A673 (cell line): ENCODE measurements at regions of chr1 and their contacts with region 1.

Region 1: DNA sequence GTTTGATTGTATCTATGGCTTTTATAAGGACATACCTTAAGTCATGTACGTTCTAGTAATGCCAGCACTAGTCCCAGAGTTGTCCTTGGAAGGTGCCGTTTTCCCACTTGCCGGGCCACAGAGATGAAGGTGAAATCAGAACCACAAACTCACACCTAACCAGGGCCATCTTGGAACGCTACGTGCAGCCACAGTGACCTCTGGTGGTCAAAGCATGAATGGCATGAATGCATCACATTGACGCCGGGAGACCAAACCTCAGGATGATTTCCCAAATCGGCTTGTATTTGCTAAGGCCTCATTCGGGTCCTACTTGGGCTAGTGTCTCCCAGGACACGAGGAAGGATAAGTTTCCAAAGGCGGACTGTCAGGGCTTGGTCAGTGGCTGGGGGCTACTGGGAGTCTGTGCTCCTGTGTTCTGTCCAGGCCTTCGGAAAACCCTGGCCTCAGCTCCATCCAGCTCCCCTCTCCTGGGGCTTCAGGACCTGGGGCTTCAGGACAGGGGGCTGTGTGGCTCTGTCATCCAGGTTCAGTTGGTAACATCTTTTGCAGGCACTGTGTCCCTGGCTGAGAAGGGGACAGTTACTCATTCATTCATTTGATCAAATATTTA is 260.5 kb downstream of the PRDM2 start:
- DNase-seq: peak; percentile 82
- H3K4me3 ChIP-seq: no peak overlapping the region
- H3K27ac ChIP-seq: no peak overlapping the region
- H3K4me1 ChIP-seq: peaks cover 34% of the 10 kb centered on the region
- H3K27me3 ChIP-seq: no peaks in the 10 kb centered on the region
- CTCF ChIP-seq: peak; percentile 95

Region 2: GRCh38 chr1:13662493-13662892 is 298.0 kb before region 1 on chr1:
- CTCF ChIA-PET with region 1: interaction called, 3 read pairs
- POLR2A ChIA-PET with region 1: no interaction called
- intact Hi-C with region 1: loop called (anchors 1 kb)
- DNase-seq: peak; percentile 95
- H3K4me3 ChIP-seq: no peak overlapping the region
- H3K27ac ChIP-seq: peak overlapping the region; percentile 73
- H3K4me1 ChIP-seq: peaks cover 34% of the 10 kb centered on the region
- H3K27me3 ChIP-seq: no peaks in the 10 kb centered on the region
- CTCF ChIP-seq: no peak

Region 3: GRCh38 chr1:13828454-13829151 is 131.9 kb before region 1 on chr1:
- CTCF ChIA-PET with region 1: interaction called, 4 read pairs
- POLR2A ChIA-PET with region 1: interaction called, 3 read pairs
- intact Hi-C with region 1: loop called (anchors 2 kb)
- DNase-seq: no peak
- H3K4me3 ChIP-seq: no peak overlapping the region
- H3K27ac ChIP-seq: no peak overlapping the region
- H3K4me1 ChIP-seq: no peaks in the 10 kb centered on the region
- H3K27me3 ChIP-seq: no peaks in the 10 kb centered on the region
- CTCF ChIP-seq: peak; percentile 76

Region 4: GRCh38 chr1:13838236-13838635 is 122.2 kb before region 1 on chr1:
- CTCF ChIA-PET with region 1: no interaction called
- POLR2A ChIA-PET with region 1: no interaction called
- intact Hi-C with region 1: loop called (anchors 1 kb)
- DNase-seq: peak; percentile 82
- H3K4me3 ChIP-seq: no peak overlapping the region
- H3K27ac ChIP-seq: peak overlapping the region; percentile 77
- H3K4me1 ChIP-seq: no peaks in the 10 kb centered on the region
- H3K27me3 ChIP-seq: no peaks in the 10 kb centered on the region
- CTCF ChIP-seq: no peak

Region 5: GRCh38 chr1:13864760-13865159 is 95.7 kb before region 1 on chr1:
- CTCF ChIA-PET with region 1: no interaction called
- POLR2A ChIA-PET with region 1: no interaction called
- intact Hi-C with region 1: no loop called
- DNase-seq: no peak
- H3K4me3 ChIP-seq: no peak overlapping the region
- H3K27ac ChIP-seq: no peak overlapping the region
- H3K4me1 ChIP-seq: peaks cover 18% of the 10 kb centered on the region
- H3K27me3 ChIP-seq: no peaks in the 10 kb centered on the region
- CTCF ChIP-seq: no peak

Region 6: GRCh38 chr1:13908128-13908527 is 52.4 kb before region 1 on chr1:
- CTCF ChIA-PET with region 1: no interaction called
- POLR2A ChIA-PET with region 1: no interaction called
- intact Hi-C with region 1: no loop called
- DNase-seq: no peak
- H3K4me3 ChIP-seq: no peak overlapping the region
- H3K27ac ChIP-seq: no peak overlapping the region
- H3K4me1 ChIP-seq: no peaks in the 10 kb centered on the region
- H3K27me3 ChIP-seq: no peaks in the 10 kb centered on the region
- CTCF ChIP-seq: no peak